A549 (cell line): ENCODE measurements at regions of chr16 and their contacts with region 1.

Region 1: DNA sequence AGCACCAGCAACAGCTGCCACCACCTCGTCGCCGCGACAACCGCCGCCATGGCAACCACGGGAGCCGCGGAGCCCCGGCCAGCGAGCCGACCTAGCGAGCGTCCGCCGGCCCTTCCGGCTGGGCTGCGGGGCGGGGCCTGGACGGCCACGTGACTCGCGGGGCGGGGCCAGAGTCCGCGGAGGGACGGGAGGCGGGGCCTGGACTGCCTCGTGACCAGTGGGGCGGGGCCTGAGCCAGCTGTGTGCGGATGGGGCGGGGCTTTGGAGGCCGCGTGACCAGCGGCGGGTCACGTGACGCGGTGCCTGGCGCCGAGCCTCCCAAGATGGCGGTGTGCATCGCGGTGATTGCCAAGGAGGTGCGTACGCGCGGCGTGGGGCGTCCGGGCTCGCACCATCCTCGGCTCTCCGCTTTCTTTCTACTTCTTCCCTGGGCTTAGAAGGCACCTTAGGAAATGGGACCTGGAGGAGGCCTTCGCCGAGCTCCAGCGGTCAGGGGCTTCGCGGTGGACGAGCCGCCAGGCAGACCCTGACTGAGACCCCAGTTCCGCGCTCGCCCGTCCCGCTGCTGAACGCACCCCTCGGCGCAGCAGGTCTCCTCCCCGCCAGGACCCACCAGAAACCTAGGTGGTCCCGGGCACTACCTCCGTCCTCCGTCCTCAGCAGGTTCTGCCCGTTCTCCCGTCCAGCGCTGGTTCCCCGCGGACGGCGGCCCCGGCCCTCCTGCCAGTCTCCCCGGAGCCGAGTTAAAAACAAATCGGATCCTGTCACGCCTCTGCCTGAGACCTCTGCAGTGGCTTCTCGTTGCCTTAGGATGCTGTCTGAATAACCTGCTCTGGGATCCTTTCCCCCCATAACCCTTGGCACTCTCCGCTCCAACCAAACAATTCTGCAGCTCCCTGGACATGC is at the starts of genes GALNS and TRAPPC2L:
- DNase-seq: peak; percentile 91 to 97
- ATAC-seq: peak; percentile 74 to 83
- H3K4me3 ChIP-seq: peak within 1 kb of the TSS; percentile 72
- H3K27ac ChIP-seq: peak within 1 kb of the TSS; percentile 82 to 92
- H3K4me1 ChIP-seq: peaks cover 19% of the 10 kb centered on the region
- CTCF ChIP-seq: no peak
- EP300 ChIP-seq: no peak
- POLR2A ChIP-seq: peak; percentile 89
- RAD21 ChIP-seq: no peak
- polyA plus RNA-seq, gene GALNS: 7.0 and 14.7 TPM in 2 replicates
- polyA plus RNA-seq, gene TRAPPC2L: 70.3 and 77.0 TPM in 2 replicates

Region 2: DNA sequence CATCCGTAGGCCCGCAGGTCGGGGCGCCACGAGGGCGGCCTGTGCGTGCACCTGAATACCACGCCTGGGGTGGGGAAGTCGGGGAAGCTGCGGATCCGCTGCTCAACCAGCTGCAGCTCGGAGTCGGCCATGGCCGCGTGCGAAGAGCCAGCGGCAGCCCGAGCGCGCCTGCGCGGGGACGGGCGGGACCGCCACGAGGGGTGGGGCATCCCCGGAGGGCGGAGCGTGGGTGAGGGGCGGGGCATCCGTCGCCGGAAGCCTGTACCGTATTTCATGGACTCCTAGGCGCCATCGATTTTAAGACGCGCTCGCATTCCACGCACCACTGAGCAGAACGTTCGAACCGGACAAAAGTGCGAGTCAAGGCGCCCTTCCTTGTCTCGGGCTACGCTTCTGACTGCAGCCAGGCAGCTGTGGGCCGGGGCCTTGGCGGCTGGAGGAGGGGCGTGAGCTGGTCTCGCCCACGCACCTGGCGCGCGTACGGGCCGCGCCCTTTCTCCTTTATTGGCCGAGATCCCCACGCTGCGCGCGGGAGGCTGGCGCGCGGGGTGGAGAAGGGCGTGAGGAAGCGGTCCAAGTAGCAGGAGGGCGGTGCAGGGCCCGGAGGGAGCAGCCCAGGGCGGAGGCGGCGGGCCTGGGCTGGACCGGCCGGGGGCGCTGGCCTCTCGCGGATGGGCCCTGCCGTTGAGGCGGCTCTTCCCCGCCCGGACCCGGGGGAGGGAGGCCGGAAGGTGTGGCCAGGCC is 45.1 kb before region 1 on chr16 and contains the start of gene APRT:
- CTCF ChIA-PET with region 1: interaction called, 39 read pairs
- POLR2A ChIA-PET with region 1: interaction called, 33 read pairs
- DNase-seq: peak; percentile 78 to 95
- ATAC-seq: peak; percentile 64 to 74
- H3K4me3 ChIP-seq: peak within 1 kb of the TSS; percentile 83
- H3K27ac ChIP-seq: peak within 1 kb of the TSS; percentile 98 to 99
- H3K4me1 ChIP-seq: peaks cover 21% of the 10 kb centered on the region
- CTCF ChIP-seq: peak; percentile 33; the same call in 2 of the 3 replicates
- EP300 ChIP-seq: no peak
- POLR2A ChIP-seq: peak; percentile 83
- RAD21 ChIP-seq: peak; percentile 31 to 44; a peak in 3 of 5 replicates
- polyA plus RNA-seq, gene APRT: 113 and 115 TPM in 2 replicates

Region 3: GRCh38 chr16:88886845-88887521 is 29.9 kb after region 1 on chr16:
- CTCF ChIA-PET with region 1: interaction called, 12 read pairs
- POLR2A ChIA-PET with region 1: interaction called, 4 read pairs
- DNase-seq: no peak
- ATAC-seq: no peak; a peak in 1 of 6 replicates
- H3K4me3 ChIP-seq: no peak overlapping the region
- H3K27ac ChIP-seq: no peak overlapping the region
- H3K4me1 ChIP-seq: peaks cover 10% of the 10 kb centered on the region; the same call in 2 of the 3 replicates
- CTCF ChIP-seq: no peak
- EP300 ChIP-seq: no peak
- POLR2A ChIP-seq: no peak
- RAD21 ChIP-seq: no peak

Region 4: DNA sequence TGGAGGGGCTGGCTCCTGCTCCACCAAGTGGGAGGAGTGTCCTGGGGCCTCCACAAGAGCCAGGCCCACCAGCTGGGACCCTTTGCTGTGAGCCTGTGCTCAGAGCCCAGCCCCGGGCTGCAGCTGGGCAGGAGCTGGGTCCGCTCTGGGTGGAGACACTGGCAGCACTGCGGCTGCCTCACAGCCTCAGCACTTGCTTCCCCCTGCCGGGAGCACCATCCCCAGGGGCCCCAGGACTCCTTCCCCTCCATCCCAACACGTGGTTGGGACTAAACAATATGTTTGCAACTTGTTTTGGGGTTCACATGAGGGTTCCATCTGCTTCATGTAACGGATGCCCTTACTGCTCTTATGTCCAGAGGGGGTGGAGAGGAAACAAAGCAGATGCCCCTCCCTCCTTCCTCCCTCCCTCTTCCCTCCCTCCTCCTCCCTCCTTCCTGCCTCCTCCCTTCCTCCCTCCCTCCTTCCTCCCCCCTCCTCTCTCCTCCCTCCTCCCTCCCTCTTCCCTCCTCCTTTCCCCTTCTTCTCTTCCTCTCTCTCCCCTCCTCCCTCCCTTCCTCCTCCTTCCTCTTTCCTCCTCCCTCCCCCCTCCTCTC is 136.2 kb after region 1 on chr16:
- CTCF ChIA-PET with region 1: no interaction called
- POLR2A ChIA-PET with region 1: no interaction called
- DNase-seq: no peak
- ATAC-seq: peak; percentile 7 to 21; a peak in 3 of 6 replicates
- H3K4me3 ChIP-seq: no peak overlapping the region
- H3K27ac ChIP-seq: no peak overlapping the region
- H3K4me1 ChIP-seq: no peaks in the 10 kb centered on the region
- CTCF ChIP-seq: no peak
- EP300 ChIP-seq: no peak
- POLR2A ChIP-seq: no peak
- RAD21 ChIP-seq: no peak